ENCODE measurements at regions of chr19 and their contacts with region 1.

Region 1: DNA sequence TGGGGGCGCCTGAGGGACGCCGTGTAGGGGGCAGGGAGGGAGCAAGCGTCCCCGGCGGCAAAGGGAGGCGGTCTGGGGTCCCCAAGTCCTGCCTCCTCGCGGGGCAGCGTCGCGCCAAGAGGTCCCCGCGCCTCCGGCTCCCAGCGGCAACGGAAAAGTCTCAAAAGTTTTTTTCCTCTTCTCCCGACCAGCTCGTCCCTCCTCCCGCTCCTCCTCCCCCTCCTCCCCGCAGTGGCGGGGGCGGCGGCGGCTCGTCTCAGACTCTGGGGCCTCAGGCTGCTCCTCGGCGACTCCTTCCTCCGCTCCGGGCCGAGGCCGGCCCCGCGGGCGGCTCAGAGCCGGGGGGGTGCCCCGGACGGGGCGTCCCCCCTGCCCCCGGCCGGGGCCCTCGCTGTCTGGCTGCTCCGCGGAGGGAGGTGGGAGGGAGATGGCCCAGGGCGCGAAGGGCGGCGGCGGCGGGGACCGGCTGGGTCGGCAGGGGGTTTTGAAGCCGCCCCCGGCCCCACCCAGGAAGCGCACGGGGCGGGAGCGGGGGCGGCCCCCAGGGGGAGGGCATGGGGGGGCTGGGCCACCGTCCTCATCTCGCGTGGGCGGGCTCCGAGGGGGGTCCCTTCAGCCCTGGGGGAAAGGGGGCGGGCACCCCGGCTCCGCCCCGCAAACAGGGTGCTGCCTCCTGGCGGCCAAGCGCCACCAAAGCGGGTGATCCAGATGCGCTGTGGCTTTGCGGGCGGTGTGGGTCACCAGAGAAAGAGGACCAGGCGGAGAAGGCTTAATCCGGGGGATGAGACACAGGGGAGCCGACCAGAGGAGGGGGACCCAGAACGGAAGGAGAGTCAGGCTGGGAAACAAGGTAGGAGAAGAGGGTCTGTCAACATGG is at the start of gene TGFB1:
- DNase-seq: peak; percentile 89 to 91
- ATAC-seq: peak; percentile 59 to 85 (median 74)
- H3K4me3 ChIP-seq: peak within 1 kb of the TSS; percentile 63 to 98 (median 79)
- H3K27ac ChIP-seq: peak within 1 kb of the TSS; percentile 81 to 98 (median 92)
- H3K4me1 ChIP-seq: peaks cover 0 to 73% (median 43%) of the 10 kb centered on the region in 9 donors
- H3K27me3 ChIP-seq: peaks cover 0 to 5% (median 0%) of the 10 kb centered on the region in 7 donors
- CTCF ChIP-seq: peak; percentile 78 to 98 (median 91)
- total RNA-seq, gene TGFB1: 9.7 to 44.9 (median 13.2) TPM

Region 2: GRCh38 chr19:41263850-41264580 is 89.7 kb before region 1 on chr19 and contains the start of gene HNRNPUL1:
- intact Hi-C with region 1: loop called in 1 of 10 experiments (anchors 5 kb)
- DNase-seq: peak; percentile 97 to 100
- ATAC-seq: peak; percentile 81 to 92 (median 89)
- H3K4me3 ChIP-seq: peak within 1 kb of the TSS; percentile 45 to 99 (median 91)
- H3K27ac ChIP-seq: peak within 1 kb of the TSS; percentile 92 to 100 (median 99)
- H3K4me1 ChIP-seq: peaks cover 15 to 38% (median 25%) of the 10 kb centered on the region in 9 donors
- H3K27me3 ChIP-seq: no peaks in the 10 kb centered on the region
- CTCF ChIP-seq: peak in 6 of 9 donors; percentile 12 to 58 (median 38)
- total RNA-seq, gene HNRNPUL1: 101 to 151 (median 108) TPM

Region 3: GRCh38 chr19:41298348-41298964 is 55.2 kb before region 1 on chr19:
- intact Hi-C with region 1: no loop called
- DNase-seq: peak; percentile 81 to 88
- ATAC-seq: peak; percentile 77 to 90 (median 86)
- H3K4me3 ChIP-seq: no peak overlapping the region
- H3K27ac ChIP-seq: peak overlapping the region; percentile 80 to 93 (median 89)
- H3K4me1 ChIP-seq: peaks cover 16 to 78% (median 58%) of the 10 kb centered on the region in 9 donors
- H3K27me3 ChIP-seq: no peaks in the 10 kb centered on the region
- CTCF ChIP-seq: no peak

Region 4: DNA sequence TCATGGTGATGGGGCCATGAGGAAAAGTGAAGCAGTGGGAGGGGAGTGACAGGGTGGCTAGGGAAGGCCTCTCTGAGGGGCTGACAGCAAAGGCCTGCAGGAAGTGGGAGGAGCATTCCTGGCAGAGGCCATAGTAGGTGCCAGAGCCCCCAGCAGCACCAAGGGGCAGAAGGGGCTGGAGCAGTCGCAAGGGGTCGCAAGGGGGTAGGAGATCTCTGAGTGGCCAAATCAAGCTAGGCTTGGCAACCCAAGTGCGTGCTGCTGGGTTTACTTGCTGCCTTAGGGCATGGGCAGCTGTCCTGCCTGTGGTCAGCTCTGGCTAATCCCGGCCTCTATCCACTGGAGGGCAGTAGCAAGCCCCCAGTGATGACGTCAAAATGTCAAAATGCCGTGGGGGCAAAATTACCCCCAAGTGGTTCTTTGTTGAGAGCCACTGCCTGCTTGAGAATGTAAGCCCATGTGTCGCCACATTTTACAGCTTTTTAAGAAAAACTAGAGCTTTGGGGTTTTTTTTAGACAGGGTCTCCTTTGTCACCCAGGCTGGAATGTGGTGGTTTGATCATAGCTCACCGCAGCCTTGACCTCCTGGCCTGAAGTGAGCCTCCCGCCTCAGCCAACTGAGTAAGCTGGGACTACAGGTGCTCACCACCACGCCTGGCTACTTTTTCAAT is 32.0 kb before region 1 on chr19:
- intact Hi-C with region 1: loop called in 4 of 10 experiments (anchors 2 to 5 kb)
- DNase-seq: no peak
- ATAC-seq: peak in 1 of 8 donors; percentile 9
- H3K4me3 ChIP-seq: no peak overlapping the region
- H3K27ac ChIP-seq: peak overlapping the region in 9 of 10 donors; percentile 32 to 96 (median 90)
- H3K4me1 ChIP-seq: peaks cover 35 to 58% (median 56%) of the 10 kb centered on the region in 9 donors
- H3K27me3 ChIP-seq: no peaks in the 10 kb centered on the region
- CTCF ChIP-seq: peak; percentile 45 to 80 (median 74)

Region 5: GRCh38 chr19:41397086-41398049 is 43.7 kb after region 1 on chr19 and contains the starts of genes BCKDHA and EXOSC5:
- intact Hi-C with region 1: loop called in 1 of 10 experiments (anchors 5 kb)
- DNase-seq: peak; percentile 99 to 100
- ATAC-seq: peak; percentile 98 to 99 (median 99)
- H3K4me3 ChIP-seq: peak within 1 kb of the TSS; percentile 58 to 96 (median 88)
- H3K27ac ChIP-seq: peak within 1 kb of the TSS; percentile 76 to 95 (median 92)
- H3K4me1 ChIP-seq: peaks cover 14 to 51% (median 36%) of the 10 kb centered on the region in 9 donors
- H3K27me3 ChIP-seq: no peaks in the 10 kb centered on the region
- CTCF ChIP-seq: no peak
- total RNA-seq, gene BCKDHA: 35.5 to 63.0 (median 42.5) TPM
- total RNA-seq, gene EXOSC5: 10.6 to 17.8 (median 13.6) TPM

Region 6: DNA sequence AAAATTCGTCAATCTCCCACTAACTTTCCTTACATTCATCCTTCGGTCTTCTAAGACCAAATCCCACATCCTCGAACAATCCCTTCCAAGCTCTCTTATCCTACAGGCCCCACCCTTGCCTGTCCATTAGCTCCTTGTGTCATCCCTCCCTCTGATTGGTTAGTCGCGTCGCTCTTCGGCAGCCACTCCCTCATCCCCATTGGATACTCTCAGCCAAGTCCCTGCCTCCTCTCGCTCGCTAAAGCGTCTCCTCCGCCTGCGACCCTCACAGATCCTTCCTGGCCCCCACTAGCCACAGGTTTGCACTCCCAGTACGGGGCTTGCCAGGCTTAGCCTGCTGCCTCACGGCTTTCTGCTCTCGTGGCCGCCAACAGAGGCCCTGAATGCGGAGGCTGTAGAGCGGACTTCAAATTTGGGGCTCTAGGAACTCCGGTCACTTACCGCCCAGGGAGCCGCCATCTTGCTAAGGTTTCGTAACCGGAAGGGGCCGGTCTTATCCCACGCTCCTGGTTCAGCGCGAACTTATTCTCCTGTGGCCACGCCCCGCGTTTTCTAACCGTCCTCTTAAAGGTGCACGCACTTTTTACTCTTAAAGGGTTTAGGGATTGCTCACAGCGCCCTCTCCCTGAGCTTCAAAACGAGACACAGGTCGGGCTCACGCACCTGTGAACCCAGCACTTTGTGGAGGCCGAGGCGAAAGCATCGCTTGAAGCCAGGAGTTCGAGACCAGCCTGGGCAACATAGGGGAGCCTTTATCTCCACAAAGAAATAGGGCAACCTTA is 85.9 kb after region 1 on chr19 and contains the start of gene DMAC2:
- intact Hi-C with region 1: loop called in 3 of 10 experiments (anchors 5 to 10 kb)
- DNase-seq: peak; percentile 93 to 97
- ATAC-seq: peak; percentile 95 to 99 (median 98)
- H3K4me3 ChIP-seq: peak within 1 kb of the TSS; percentile 54 to 83 (median 74)
- H3K27ac ChIP-seq: peak within 1 kb of the TSS; percentile 83 to 97 (median 96)
- H3K4me1 ChIP-seq: peaks cover 0 to 31% (median 15%) of the 10 kb centered on the region in 9 donors
- H3K27me3 ChIP-seq: peaks cover 0 to 6% (median 0%) of the 10 kb centered on the region in 7 donors
- CTCF ChIP-seq: peak in 8 of 9 donors; percentile 46 to 74 (median 58)
- total RNA-seq, gene DMAC2: 80.8 to 139 (median 101) TPM

Measured in heart right ventricle (tissue), 16 donors.